ENCODE measurements at regions of chr2 and their contacts with region 1.

Region 1: GRCh38 chr2:121665504-121665903 is 16.2 kb upstream of the CLASP1 start:
- DNase-seq: peak in 5 of 42 donors; percentile 7 to 39 (median 11)

Region 2: GRCh38 chr2:121722479-121722878 is 57.0 kb after region 1 on chr2:
- intact Hi-C with region 1: loop called (anchors 10 kb)
- DNase-seq: peak in 11 of 42 donors; percentile 18 to 60 (median 32)

Measured in head of caudate nucleus (tissue), 42 donors.